ENCODE measurements at regions of chr1 and their contacts with region 1.

Region 1: DNA sequence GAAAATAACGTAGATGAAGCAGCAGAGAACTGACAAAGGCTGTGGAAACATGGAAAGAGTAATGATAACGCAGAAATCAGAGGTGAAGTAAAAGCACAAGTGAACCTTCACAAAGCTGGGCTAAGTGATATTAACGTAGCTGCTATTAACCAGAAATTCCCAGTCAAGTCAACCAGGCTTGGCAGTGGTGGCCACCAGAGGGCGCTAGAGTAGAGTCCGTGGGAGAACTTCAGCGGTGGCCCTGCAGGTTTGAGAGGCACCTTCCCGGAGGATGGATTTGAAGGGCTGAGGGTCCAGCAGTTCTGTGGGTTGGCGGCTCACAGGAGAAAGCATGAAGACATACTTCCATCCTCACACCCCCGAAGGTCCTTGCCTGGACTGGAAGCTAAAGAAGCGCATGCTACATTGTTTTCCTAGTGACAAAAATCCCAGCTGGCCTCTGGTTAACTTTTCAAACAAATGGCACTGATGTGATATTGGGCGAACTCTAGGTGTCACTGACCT is 81.7 kb upstream of the ZNF648 start:
- DNase-seq: peak; percentile 92 to 95 (median 93)
- H3K4me3 ChIP-seq: no peak overlapping the region
- H3K27ac ChIP-seq: peak overlapping the region in 1 of 2 donors; percentile 91
- H3K4me1 ChIP-seq: peaks cover 0 to 22% (median 17%) of the 10 kb centered on the region in 3 donors
- H3K27me3 ChIP-seq: no peaks in the 10 kb centered on the region
- CTCF ChIP-seq: peak; percentile 99

Region 2: GRCh38 chr1:182249201-182249676 is 106.0 kb after region 1 on chr1:
- intact Hi-C with region 1: no loop called
- DNase-seq: no peak
- H3K4me3 ChIP-seq: no peak overlapping the region
- H3K27ac ChIP-seq: no peak overlapping the region
- H3K4me1 ChIP-seq: no peaks in the 10 kb centered on the region
- H3K27me3 ChIP-seq: no peaks in the 10 kb centered on the region
- CTCF ChIP-seq: no peak

Region 3: GRCh38 chr1:182391362-182392044 is 248.3 kb after region 1 on chr1 and contains the start of gene GLUL:
- intact Hi-C with region 1: loop called (anchors 10 kb)
- DNase-seq: peak; percentile 97 to 99 (median 98)
- H3K4me3 ChIP-seq: peak within 1 kb of the TSS; percentile 75 to 90 (median 80)
- H3K27ac ChIP-seq: peak within 1 kb of the TSS; percentile 94 to 96
- H3K4me1 ChIP-seq: peaks cover 2 to 16% (median 3%) of the 10 kb centered on the region in 3 donors
- H3K27me3 ChIP-seq: no peaks in the 10 kb centered on the region
- CTCF ChIP-seq: no peak
- total RNA-seq, gene GLUL: 533 TPM

Measured in kidney (tissue), 22 donors.